Activated T-helper 1 cell treated with anti-CD3 and anti-CD28 coated beads, Interleukin-12 subunit alpha, Interleukin-12 subunit beta, Interleukin-2, Interleukin-4 antibody, amounts not matched to agents 30 ng/mL and 10 ng/mL and 1 ng/mL, durations not matched to agents 14 hours and 24 hours and 36 hours (primary cell): ENCODE measurements at regions of chr18 and their contacts with region 1.

Region 1: GRCh38 chr18:74495581-74496507 is at the start of gene CNDP2:
- DNase-seq: peak; percentile 99
- H3K4me3 Mint-ChIP-seq: peak within 1 kb of the TSS; percentile 88
- H3K27ac Mint-ChIP-seq: peak within 1 kb of the TSS; percentile 98
- H3K4me1 Mint-ChIP-seq: peaks cover 49% of the 10 kb centered on the region
- H3K27me3 Mint-ChIP-seq: peaks cover 9% of the 10 kb centered on the region
- total RNA-seq, gene CNDP2: 159 and 164 TPM in 2 replicates

Region 2: DNA sequence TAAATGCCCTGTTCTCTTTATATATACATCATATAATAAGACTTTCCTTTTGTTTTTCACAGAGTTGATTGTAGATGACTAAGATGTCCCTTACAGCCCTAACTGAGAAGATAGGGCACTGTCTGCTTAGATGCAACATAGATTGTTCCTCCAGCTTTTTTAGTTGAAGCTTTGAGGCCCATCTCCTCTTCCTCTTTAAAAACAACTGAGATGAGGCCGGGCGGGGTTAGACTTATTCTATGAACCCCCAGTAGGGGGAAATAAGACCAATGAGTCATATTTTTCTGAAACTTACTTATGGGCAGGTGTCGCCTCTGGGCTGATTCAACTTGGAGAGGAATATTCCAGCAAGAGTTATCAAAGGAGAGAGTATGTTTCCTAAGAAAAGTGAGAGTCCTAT is 432.8 kb before region 1 on chr18:
- intact Hi-C with region 1: loop called (anchors 1 kb)
- DNase-seq: no peak
- H3K4me3 Mint-ChIP-seq: peak overlapping the region; percentile 19
- H3K27ac Mint-ChIP-seq: peak overlapping the region; percentile 77
- H3K4me1 Mint-ChIP-seq: peaks cover 50% of the 10 kb centered on the region
- H3K27me3 Mint-ChIP-seq: no peaks in the 10 kb centered on the region

Region 3: DNA sequence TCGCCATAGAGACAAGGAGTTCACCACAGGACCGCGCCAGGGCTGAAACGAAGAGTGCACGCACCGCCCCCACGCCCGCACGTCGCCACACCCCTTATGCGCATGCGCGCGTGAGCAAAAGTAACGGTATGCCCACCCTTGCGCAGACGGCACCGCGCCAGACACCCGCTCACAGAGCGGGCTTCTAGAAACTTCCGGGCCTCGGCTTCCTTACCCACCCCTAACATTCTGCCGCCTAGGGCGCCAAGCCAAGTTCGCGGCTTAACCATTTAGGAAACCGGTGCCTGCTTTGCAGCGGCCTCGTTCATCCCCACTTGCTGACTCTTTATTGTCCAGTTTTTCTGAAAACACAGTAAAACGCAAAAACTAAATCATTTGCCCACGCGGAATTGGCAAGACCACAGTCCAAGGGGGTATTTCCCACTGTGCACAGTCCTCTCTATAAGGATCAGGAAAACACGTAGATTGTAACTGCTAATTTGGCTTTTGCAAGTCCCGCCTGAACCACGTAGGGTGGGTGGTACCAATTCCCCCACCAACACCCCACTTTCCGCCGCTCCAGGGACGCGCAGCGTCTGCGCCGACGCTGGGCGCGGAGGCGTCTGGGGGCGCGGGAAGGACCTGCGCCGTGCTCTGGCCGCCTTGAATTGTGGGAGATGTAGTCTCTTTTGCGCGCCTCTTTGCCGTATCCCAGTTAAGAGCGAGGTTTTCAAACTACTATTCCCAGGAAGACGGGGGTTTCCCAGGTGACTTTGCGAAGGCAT is 347.9 kb before region 1 on chr18 and contains the starts of genes FBXO15 and TIMM21:
- intact Hi-C with region 1: loop called (anchors 1 kb)
- DNase-seq: peak; percentile 94
- H3K4me3 Mint-ChIP-seq: peak within 1 kb of the TSS; percentile 92
- H3K27ac Mint-ChIP-seq: peak within 1 kb of the TSS; percentile 96
- H3K4me1 Mint-ChIP-seq: peaks cover 51% of the 10 kb centered on the region
- H3K27me3 Mint-ChIP-seq: peaks cover 8% of the 10 kb centered on the region
- total RNA-seq, gene FBXO15: 0.83 and 1.0 TPM in 2 replicates
- total RNA-seq, gene TIMM21: 54.1 and 60.2 TPM in 2 replicates

Region 4: DNA sequence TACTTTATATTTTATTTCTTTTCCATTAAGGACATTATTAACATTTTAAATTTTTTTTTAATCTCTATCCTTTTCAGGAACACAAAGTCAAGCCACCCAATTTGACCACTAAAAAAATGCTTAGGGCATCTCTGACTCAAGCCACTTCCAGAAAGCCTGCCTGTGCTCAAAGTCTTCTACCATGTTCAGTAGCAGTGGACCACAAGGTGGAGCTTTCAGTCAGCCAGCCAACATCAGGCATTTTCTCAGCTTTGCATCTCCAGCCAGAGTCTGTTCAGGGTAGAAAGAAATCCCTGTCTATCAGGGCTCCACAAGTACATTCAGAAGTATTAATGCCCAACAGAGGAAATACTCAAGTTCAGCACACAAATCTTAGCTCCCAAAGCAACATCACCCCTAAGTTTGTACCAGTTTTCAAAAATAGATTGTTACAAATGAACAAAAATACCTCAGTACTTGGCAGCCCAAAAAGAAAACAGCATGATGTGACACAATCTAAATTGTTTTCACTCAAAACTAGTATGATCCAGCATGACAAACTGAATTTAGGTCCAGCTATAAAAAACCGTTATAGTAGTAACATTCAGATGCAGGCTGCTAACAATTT is 142.6 kb before region 1 on chr18:
- intact Hi-C with region 1: loop called (anchors 1 kb)
- DNase-seq: peak; percentile 22
- H3K4me3 Mint-ChIP-seq: no peak overlapping the region
- H3K27ac Mint-ChIP-seq: no peak overlapping the region
- H3K4me1 Mint-ChIP-seq: peaks cover 23% of the 10 kb centered on the region
- H3K27me3 Mint-ChIP-seq: peaks cover 18% of the 10 kb centered on the region

Region 5: GRCh38 chr18:74551936-74552555 is 56.2 kb after region 1 on chr18:
- intact Hi-C with region 1: loop called (anchors 1 kb)
- DNase-seq: peak; percentile 60
- H3K4me3 Mint-ChIP-seq: no peak overlapping the region
- H3K27ac Mint-ChIP-seq: no peak overlapping the region
- H3K4me1 Mint-ChIP-seq: peaks cover 6% of the 10 kb centered on the region
- H3K27me3 Mint-ChIP-seq: peaks cover 13% of the 10 kb centered on the region

Region 6: DNA sequence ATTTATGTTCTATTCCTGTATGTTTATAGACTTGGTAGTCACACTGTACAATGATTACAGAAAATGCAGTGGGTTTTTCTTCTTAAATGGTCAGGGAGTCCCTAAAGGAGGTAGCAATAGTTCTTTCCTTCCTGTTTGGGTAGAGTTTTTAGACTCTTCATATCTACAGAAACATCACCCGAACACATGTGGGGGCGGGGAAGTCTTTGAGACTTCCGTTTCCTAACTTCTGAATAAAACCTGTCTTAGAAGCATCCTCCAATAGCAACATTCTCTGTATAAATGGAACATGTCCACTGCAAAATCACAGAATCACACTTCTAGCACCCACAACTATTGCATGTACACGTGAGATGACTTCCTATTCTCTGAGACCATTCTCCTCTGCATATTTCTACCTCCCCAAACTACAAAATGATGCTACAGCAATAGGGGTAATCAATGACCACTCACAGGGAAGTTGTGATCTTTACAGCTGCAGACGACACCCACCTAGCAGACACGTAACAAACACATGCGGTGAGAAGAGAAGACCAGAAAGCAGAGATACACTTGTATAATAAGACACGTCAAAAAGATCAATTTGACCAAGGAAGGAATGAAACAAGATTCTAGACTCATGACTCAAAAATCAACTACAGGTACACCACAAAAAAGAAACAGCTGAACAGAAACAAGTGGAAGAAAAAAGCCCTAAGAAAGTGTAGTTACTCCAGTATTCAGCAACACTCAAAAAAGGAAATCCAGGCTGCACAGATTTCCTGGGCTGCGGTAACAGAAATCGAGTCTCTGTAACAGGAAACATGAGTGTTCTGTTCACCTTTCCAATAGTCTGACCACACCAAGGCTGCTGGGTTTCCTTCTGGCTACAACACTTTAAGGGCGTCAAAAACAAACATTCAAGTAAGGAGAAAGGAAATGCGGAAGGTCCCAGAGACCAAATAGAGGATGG is 1878.8 kb after region 1 on chr18:
- intact Hi-C with region 1: loop called (anchors 5 kb)
- DNase-seq: peak; percentile 50
- H3K4me3 Mint-ChIP-seq: peak overlapping the region; percentile 8
- H3K27ac Mint-ChIP-seq: peak overlapping the region; percentile 70
- H3K4me1 Mint-ChIP-seq: peaks cover 40% of the 10 kb centered on the region
- H3K27me3 Mint-ChIP-seq: peaks cover 12% of the 10 kb centered on the region